ENCODE measurements at regions of chr19 and their contacts with region 1.

Region 1: GRCh38 chr19:40433391-40434216 is 7.8 kb upstream of the SERTAD1 start:
- DNase-seq: peak; percentile 92
- H3K4me3 ChIP-seq: peak overlapping the region; percentile 29
- H3K4me3 Mint-ChIP-seq: peak overlapping the region; percentile 83
- H3K27ac Mint-ChIP-seq: peak overlapping the region; percentile 97
- H3K4me1 ChIP-seq: peaks cover 16% of the 10 kb centered on the region
- H3K4me1 Mint-ChIP-seq: peaks cover 8% of the 10 kb centered on the region
- H3K27me3 ChIP-seq: no peaks in the 10 kb centered on the region
- H3K27me3 Mint-ChIP-seq: no peaks in the 10 kb centered on the region
- CTCF ChIP-seq: no peak

Region 2: DNA sequence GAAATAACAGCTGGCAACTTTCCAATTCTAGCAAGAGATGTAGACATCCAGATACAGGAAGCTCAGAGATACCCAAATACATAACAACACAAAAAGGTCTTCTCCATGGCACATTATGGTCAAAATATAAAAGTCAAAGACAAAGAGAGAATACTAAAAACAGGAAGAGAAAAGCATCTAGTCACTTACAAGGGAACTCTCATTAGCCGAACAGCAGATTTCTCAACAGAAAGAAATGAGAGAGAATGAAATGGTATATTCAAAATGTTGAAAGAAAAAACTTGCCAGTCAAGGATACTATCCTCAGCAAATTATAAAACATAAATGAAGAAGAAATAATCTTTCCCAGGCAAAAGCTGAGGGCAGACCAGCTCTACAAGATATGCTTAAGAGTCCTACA is 355.2 kb before region 1 on chr19:
- CTCF ChIA-PET with region 1: no interaction called
- POLR2A ChIA-PET with region 1: no interaction called
- intact Hi-C with region 1: no loop called
- DNase-seq: no peak
- H3K4me3 ChIP-seq: no peak overlapping the region
- H3K4me3 Mint-ChIP-seq: no peak overlapping the region
- H3K27ac Mint-ChIP-seq: no peak overlapping the region
- H3K4me1 ChIP-seq: no peaks in the 10 kb centered on the region
- H3K4me1 Mint-ChIP-seq: no peaks in the 10 kb centered on the region
- H3K27me3 ChIP-seq: no peaks in the 10 kb centered on the region
- H3K27me3 Mint-ChIP-seq: no peaks in the 10 kb centered on the region
- CTCF ChIP-seq: no peak

Region 3: DNA sequence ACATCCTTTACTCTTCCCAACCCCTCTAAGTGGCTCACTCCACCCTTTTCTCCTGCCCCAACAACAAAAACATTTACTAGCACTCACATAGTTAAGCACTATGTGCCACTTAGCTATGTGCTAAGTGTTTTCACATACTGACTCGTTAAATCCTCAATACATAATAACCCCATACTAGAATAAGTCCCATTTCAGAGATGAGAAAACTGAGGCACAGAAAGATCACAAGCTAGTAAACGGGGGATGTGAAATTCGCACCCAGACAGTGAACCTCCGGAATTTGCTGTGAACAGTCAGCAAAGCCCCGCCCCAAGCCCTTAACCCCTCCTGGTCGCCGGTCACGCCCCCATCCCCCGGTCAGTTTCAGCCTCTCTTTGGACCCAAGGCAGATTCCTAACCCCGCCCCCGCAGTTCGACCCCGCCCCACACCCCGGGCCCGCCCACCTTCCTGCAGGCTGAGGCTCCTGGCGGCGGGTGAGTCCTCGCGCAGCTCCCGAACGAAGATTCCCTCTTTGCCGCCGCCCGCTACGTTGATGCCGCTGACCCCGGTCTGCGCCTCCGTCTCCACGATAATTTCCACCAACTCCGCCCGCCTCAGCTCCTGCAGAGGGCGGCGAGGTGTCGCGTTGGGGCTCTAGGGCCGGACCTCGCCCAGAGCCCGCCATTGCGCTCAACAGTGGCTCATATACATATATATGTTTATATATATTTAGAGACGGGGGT is 30.2 kb before region 1 on chr19:
- CTCF ChIA-PET with region 1: no interaction called
- POLR2A ChIA-PET with region 1: no interaction called
- intact Hi-C with region 1: no loop called
- DNase-seq: peak; percentile 98
- H3K4me3 ChIP-seq: peak overlapping the region; percentile 78
- H3K4me3 Mint-ChIP-seq: peak overlapping the region; percentile 79
- H3K27ac Mint-ChIP-seq: peak overlapping the region; percentile 42
- H3K4me1 ChIP-seq: peaks cover 2% of the 10 kb centered on the region; the same call in 1 of the 2 replicates
- H3K4me1 Mint-ChIP-seq: peaks cover 23% of the 10 kb centered on the region
- H3K27me3 ChIP-seq: no peaks in the 10 kb centered on the region
- H3K27me3 Mint-ChIP-seq: no peaks in the 10 kb centered on the region
- CTCF ChIP-seq: no peak

Region 4: DNA sequence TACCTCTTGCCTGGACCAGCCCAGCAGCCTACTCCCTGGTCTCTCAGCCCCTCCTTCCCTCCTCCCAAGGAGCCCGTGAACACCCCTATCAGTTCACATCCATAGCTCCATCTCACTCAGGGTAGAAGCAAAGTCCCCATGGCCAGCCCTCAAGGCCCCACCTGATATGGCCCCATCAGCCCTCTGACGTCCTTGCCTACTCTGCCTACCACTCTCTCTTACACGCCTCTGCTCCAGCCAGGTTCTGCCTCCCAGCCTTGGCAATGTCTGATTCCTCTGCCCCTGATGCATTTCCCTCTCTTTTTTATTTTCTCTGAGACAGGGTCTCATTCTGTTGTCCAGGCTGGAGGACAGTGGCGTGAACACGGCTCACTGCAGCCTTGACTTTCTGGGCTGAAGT is 18.4 kb after region 1 on chr19:
- CTCF ChIA-PET with region 1: no interaction called
- POLR2A ChIA-PET with region 1: interaction called, 12 read pairs
- intact Hi-C with region 1: no loop called
- DNase-seq: no peak
- H3K4me3 ChIP-seq: no peak overlapping the region
- H3K4me3 Mint-ChIP-seq: no peak overlapping the region
- H3K27ac Mint-ChIP-seq: peak overlapping the region; percentile 84
- H3K4me1 ChIP-seq: peaks cover 18% of the 10 kb centered on the region
- H3K4me1 Mint-ChIP-seq: peaks cover 17% of the 10 kb centered on the region
- H3K27me3 ChIP-seq: no peaks in the 10 kb centered on the region
- H3K27me3 Mint-ChIP-seq: no peaks in the 10 kb centered on the region
- CTCF ChIP-seq: no peak

Measured in Caco-2 (cell line).